Gastrocnemius medialis (tissue), 4 donors: ENCODE measurements at regions of chr7 and their contacts with region 1.

Region 1: GRCh38 chr7:121366852-121367431 is 29.2 kb downstream of the FAM3C start:
- DNase-seq: no peak
- ATAC-seq: no peak
- H3K4me3 ChIP-seq: no peak overlapping the region
- H3K27ac ChIP-seq: no peak overlapping the region
- H3K4me1 ChIP-seq: no peaks in the 10 kb centered on the region
- H3K27me3 ChIP-seq: no peaks in the 10 kb centered on the region
- CTCF ChIP-seq: peak; percentile 45 to 73 (median 70)
- POLR2A ChIP-seq: no peak

Region 2: GRCh38 chr7:121994625-121995410 is 627.9 kb after region 1 on chr7:
- in situ Hi-C with region 1: loop called in 1 of 4 experiments (anchors 25 kb)
- intact Hi-C with region 1: no loop called
- DNase-seq: peak in 1 of 2 donors; percentile 12
- ATAC-seq: peak; percentile 39 to 60
- H3K4me3 ChIP-seq: no peak overlapping the region
- H3K27ac ChIP-seq: no peak overlapping the region
- H3K4me1 ChIP-seq: no peaks in the 10 kb centered on the region
- H3K27me3 ChIP-seq: no peaks in the 10 kb centered on the region
- CTCF ChIP-seq: peak in 3 of 5 experiments; percentile 6 to 33 (median 15)
- POLR2A ChIP-seq: no peak